ENCODE measurements at regions of chr7 and their contacts with region 1.

Region 1: GRCh38 chr7:95690367-95690947 is 81.9 kb upstream of the DYNC1I1 start:
- DNase-seq: peak; percentile 54
- ATAC-seq: peak; percentile 79
- H3K4me3 ChIP-seq: peak overlapping the region in 1 of 2 experiments; percentile 19; a peak in 2 of 4 replicates
- H3K27ac ChIP-seq: no peak overlapping the region
- H3K4me1 ChIP-seq: no peaks in the 10 kb centered on the region
- H3K27me3 ChIP-seq: peaks cover 5% of the 10 kb centered on the region; the same call in 1 of the 2 replicates
- CTCF ChIP-seq: peak; percentile 82

Region 2: GRCh38 chr7:95476904-95477594 is 213.4 kb before region 1 on chr7:
- CTCF ChIA-PET with region 1: interaction called, 15 read pairs
- POLR2A ChIA-PET with region 1: no interaction called
- in situ Hi-C with region 1: no loop called
- intact Hi-C with region 1: no loop called
- DNase-seq: no peak
- ATAC-seq: peak; percentile 71; the same call in 1 of the 2 replicates
- H3K4me3 ChIP-seq: no peak overlapping the region
- H3K27ac ChIP-seq: no peak overlapping the region
- H3K4me1 ChIP-seq: no peaks in the 10 kb centered on the region
- H3K27me3 ChIP-seq: no peaks in the 10 kb centered on the region
- CTCF ChIP-seq: peak; percentile 76

Region 3: GRCh38 chr7:95511716-95512260 is 178.7 kb before region 1 on chr7:
- CTCF ChIA-PET with region 1: interaction called, 33 read pairs
- POLR2A ChIA-PET with region 1: no interaction called
- in situ Hi-C with region 1: loop called (anchors 25 kb)
- intact Hi-C with region 1: loop called (anchors 1 kb)
- DNase-seq: no peak
- ATAC-seq: peak; percentile 90
- H3K4me3 ChIP-seq: no peak overlapping the region
- H3K27ac ChIP-seq: no peak overlapping the region
- H3K4me1 ChIP-seq: no peaks in the 10 kb centered on the region
- H3K27me3 ChIP-seq: no peaks in the 10 kb centered on the region
- CTCF ChIP-seq: peak; percentile 88

Region 4: DNA sequence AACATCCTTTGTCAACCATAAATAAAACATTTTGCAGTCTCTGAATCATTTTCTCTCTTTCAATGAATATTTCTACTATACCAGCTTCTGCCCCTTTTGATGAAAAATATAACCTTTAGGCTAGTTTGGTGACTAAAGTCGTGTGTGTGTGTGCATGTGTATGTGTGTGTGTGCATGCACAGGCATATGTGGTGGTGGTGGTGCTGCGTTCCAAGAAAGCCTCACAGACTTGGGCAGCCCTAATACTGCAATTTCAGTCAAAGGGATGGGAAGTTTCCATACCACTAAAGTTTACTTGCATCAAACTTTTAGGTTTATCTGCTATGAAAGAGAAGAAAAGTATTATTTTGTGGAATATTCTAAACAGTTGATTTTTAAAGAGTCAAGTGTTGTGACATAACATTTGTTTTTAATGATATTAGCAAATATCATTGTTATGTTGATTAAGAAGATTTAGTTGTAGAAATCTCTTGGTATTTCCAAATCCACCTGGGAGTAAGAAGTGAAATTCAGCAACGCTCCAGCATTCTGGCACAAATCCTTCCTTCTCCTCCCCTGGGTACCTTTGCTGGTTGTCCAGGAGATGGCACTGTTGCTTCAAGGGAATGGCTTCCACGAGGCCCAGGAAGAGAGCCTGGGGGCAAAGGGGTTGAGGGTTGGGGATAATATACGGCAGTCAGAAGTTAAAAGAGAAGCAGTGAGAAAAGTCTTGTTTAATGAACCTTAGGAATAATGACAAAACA is 163.3 kb before region 1 on chr7:
- CTCF ChIA-PET with region 1: interaction called, 9 read pairs
- POLR2A ChIA-PET with region 1: no interaction called
- in situ Hi-C with region 1: loop called (anchors 25 kb)
- intact Hi-C with region 1: loop called (anchors 1 kb)
- DNase-seq: peak; percentile 32
- ATAC-seq: peak; percentile 92
- H3K4me3 ChIP-seq: no peak overlapping the region
- H3K27ac ChIP-seq: no peak overlapping the region
- H3K4me1 ChIP-seq: no peaks in the 10 kb centered on the region
- H3K27me3 ChIP-seq: 0 out of 2 replicates have a peak, but pooled peaks cover 3% of the 10 kb centered on the region
- CTCF ChIP-seq: peak; percentile 88

Region 5: DNA sequence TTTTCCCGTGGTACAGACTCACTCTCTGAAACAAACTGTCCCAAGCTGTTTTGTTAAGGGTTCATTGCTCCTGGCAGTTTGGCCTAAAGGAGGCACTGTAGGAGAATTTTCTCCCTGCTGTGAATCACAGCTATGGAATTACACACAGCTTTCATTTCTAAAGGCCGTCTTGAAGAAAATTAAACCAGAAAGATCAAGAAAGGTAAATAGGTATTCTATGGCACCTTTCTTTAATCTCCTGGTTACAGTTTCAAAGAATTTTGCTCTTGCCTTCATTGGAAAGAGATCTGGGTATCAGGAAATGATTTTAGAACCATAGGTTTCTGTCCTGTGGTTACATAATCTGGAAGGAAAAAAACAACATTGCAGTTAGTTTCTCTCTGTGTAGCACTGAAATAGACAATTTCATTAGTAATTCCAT is 145.4 kb before region 1 on chr7:
- CTCF ChIA-PET with region 1: interaction called, 10 read pairs
- POLR2A ChIA-PET with region 1: no interaction called
- in situ Hi-C with region 1: no loop called
- intact Hi-C with region 1: no loop called
- DNase-seq: peak; percentile 78
- ATAC-seq: peak; percentile 93
- H3K4me3 ChIP-seq: peak overlapping the region; percentile 15 to 25; a peak in 3 of 4 replicates
- H3K27ac ChIP-seq: no peak overlapping the region
- H3K4me1 ChIP-seq: no peaks in the 10 kb centered on the region; the same call in 1 of the 2 replicates
- H3K27me3 ChIP-seq: no peaks in the 10 kb centered on the region
- CTCF ChIP-seq: peak; percentile 75

Region 6: DNA sequence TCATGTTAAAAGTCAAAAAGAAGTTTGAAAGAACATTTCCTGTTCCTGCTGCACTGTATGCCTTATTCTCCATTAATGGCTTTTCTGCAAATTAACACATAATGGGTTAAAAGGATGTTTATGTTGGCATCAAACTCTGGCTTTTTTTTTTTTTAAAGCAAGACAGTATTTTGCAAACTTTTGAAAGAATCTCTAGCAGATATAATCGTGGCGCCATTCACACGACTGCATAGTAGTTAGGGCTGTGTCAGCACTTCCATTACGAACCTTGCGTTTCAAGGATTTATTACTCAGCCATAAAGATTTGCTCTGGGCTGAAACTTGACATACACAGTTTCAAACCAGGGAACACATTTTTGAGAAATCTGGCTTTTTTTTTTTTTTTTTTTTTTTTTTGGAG is 289.7 kb after region 1 on chr7:
- CTCF ChIA-PET with region 1: interaction called, 13 read pairs
- POLR2A ChIA-PET with region 1: no interaction called
- in situ Hi-C with region 1: no loop called
- intact Hi-C with region 1: no loop called
- DNase-seq: no peak
- ATAC-seq: no peak
- H3K4me3 ChIP-seq: no peak overlapping the region
- H3K27ac ChIP-seq: no peak overlapping the region
- H3K4me1 ChIP-seq: no peaks in the 10 kb centered on the region
- H3K27me3 ChIP-seq: peaks cover 3% of the 10 kb centered on the region; the same call in 1 of the 2 replicates
- CTCF ChIP-seq: no peak

Measured in Panc1 (cell line).